Vagina (tissue), 2 donors: ENCODE measurements at regions of chr22 and their contacts with region 1.

Region 1: DNA sequence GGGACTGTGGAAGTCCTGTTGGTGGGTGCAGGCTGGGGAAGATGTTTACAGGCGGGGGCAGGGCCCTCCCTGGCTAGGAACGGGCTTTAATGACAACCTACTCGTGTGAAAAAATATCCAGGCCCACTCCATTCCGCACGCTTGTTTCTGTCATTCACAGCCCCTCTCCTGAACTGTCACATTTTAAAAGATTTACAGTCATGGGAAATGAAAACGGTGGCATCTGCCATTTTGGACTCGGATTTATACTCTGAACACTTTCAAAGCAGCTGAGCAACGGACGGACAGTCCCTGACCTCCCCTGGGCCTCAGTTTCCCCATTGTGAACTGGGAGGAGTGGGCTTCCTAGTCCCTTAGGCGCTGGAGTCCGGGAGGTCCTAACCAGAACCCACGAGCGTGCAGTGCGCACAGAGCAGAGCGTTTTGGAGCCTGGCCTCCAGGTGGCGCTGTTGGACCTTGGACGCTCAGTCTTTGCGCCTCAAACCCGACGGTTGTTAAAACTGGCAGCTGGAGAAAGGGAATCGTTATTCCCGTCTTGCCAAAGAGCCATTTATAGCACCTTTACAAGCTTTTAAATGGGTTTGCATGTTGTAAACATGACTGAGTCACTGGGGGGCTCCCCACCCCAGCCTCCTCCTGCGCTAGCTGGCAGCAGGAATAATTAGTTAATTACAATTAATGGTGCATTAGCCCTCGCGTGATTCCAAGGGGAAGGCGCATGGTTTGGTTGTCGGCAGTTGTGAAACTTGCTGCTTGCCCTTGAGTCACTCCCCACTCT is 75.3 kb downstream of the FBLN1 start:
- DNase-seq: no peak
- H3K4me3 ChIP-seq: no peak overlapping the region
- H3K27ac ChIP-seq: peak overlapping the region; percentile 59
- H3K4me1 ChIP-seq: peaks cover 45% of the 10 kb centered on the region
- H3K27me3 ChIP-seq: no peaks in the 10 kb centered on the region
- CTCF ChIP-seq: peak; percentile 86 to 92 (median 86)
- POLR2A ChIP-seq: no peak

Region 2: DNA sequence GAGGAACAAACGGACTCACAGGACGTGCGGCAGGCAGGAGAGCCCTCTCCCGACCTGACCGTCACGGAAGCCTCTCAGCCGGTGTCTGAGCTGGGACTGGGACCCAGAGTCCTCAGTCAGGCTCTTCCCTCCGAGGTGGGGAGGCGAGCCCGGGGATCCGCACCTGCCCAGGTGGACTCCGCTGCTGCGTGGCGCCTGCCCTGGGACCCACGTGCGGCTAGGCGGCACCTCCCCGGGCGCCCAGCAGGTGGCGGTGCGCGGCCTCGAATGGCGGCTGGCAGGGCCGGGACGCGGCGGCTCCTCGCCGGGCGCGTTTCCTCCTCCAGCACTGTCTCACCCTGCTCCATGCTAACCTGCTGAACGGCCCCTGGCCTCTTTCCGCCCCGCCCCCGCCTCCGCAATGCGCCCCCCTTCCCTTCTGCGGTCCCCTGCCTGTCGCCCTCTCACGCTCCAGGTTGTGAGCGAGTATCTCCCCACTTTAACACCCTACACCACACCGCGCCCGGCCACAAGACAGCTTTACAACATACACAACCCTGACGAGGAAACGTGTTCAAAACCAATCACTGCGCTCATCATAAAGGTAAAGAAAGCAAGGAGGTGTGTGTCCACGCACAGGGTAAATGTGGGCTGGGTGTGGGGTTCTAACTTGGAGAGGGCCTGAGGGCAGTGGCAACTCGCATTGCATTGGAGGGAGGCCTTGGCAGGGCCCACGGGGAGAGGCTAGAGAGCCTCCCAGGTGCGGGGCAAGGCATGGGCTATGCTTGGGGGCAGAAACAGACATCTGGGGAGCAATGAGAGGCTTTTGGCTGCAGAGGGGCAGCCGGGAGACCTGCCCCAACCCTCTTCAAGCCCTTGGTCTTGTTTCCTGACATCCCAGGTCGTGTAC is 67.8 kb after region 1 on chr22:
- intact Hi-C with region 1: loop called (anchors 10 kb)
- DNase-seq: peak in 1 of 2 donors; percentile 88
- H3K4me3 ChIP-seq: peak overlapping the region; percentile 4 to 7
- H3K27ac ChIP-seq: peak overlapping the region; percentile 15
- H3K4me1 ChIP-seq: peaks cover 16% of the 10 kb centered on the region
- H3K27me3 ChIP-seq: no peaks in the 10 kb centered on the region
- CTCF ChIP-seq: peak; percentile 82 to 92 (median 89)
- POLR2A ChIP-seq: no peak